ENCODE measurements at regions of chr14 and their contacts with region 1.

Region 1: GRCh38 chr14:91911474-91912032 is 35.9 kb downstream of the FBLN5 start:
- DNase-seq: peak; percentile 37
- H3K4me3 ChIP-seq: no peak overlapping the region
- H3K27ac ChIP-seq: peak overlapping the region in 1 of 4 donors; percentile 32
- H3K4me1 ChIP-seq: peaks cover 0 to 10% (median 3%) of the 10 kb centered on the region in 4 donors
- H3K27me3 ChIP-seq: no peaks in the 10 kb centered on the region
- CTCF ChIP-seq: peak; percentile 48 to 67 (median 50)
- EP300 ChIP-seq: no peak
- POLR2A ChIP-seq: no peak

Region 2: DNA sequence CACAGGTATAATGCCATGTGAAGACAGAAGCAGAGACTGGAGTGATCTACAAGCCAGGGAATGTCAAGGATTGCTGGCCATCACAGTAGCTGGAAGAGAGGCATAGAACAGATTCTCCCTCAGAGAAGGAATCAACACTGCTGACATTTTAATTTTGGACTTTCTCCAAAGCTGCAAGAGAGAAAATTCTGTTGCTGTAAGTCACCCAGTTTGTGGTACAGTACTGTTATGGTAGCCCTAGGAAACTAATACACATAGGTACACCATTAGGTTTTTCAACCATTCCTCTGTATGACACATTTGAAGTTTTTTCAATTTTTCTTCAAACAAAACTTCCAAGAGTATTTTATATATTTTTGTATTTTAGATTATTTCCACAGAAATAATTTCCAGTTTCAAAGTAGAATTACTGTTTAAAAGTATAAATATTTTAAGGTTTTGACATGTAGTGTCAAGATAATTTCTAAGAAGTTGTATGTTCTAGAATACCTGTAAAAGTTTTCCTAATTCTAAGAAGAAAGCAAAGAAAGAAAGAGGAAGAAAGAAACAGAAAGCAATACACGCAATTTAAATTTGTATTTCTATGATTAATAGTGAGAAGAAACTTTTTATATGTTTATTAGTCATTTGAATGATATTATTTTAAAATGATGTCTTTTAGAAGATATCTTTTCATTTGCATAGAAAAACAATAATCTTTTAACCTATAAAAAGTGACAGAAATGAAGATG is 114.8 kb before region 1 on chr14:
- in situ Hi-C with region 1: no loop called
- intact Hi-C with region 1: no loop called
- DNase-seq: no peak
- H3K4me3 ChIP-seq: no peak overlapping the region
- H3K27ac ChIP-seq: no peak overlapping the region
- H3K4me1 ChIP-seq: no peaks in the 10 kb centered on the region
- H3K27me3 ChIP-seq: no peaks in the 10 kb centered on the region
- CTCF ChIP-seq: no peak
- EP300 ChIP-seq: no peak
- POLR2A ChIP-seq: no peak

Region 3: GRCh38 chr14:91885839-91886238 is 25.7 kb before region 1 on chr14:
- in situ Hi-C with region 1: no loop called
- intact Hi-C with region 1: loop called (anchors 1 kb)
- DNase-seq: no peak
- H3K4me3 ChIP-seq: no peak overlapping the region
- H3K27ac ChIP-seq: peak overlapping the region in 2 of 4 donors; percentile 18 to 26
- H3K4me1 ChIP-seq: peaks cover 4 to 15% (median 9%) of the 10 kb centered on the region in 4 donors
- H3K27me3 ChIP-seq: no peaks in the 10 kb centered on the region
- CTCF ChIP-seq: no peak
- EP300 ChIP-seq: no peak
- POLR2A ChIP-seq: no peak

Region 4: DNA sequence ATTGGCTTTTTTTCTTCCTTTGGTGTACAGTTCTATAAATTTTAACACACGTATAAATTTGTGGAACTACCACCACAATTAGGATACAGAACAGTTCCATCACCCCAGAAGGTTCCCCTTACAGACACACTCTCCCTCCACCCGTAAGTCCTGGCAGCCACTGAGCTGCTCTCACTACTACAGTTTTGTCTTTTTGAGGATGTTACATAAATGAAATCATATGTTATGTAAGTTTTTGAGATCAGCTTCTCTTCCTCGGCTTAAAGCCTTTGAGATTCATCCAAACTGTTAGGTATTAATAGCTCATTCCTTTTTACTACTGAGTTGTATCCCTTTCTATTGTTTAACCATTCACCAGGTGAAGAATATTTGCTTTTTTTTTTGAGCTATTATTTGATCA is 337.1 kb after region 1 on chr14:
- in situ Hi-C with region 1: no loop called
- intact Hi-C with region 1: no loop called
- DNase-seq: no peak
- H3K4me3 ChIP-seq: no peak overlapping the region
- H3K27ac ChIP-seq: no peak overlapping the region
- H3K4me1 ChIP-seq: no peaks in the 10 kb centered on the region
- H3K27me3 ChIP-seq: peaks cover 8% of the 10 kb centered on the region
- CTCF ChIP-seq: no peak
- EP300 ChIP-seq: no peak
- POLR2A ChIP-seq: no peak